Cardiac septum (tissue), 1 donor: ENCODE measurements at regions of chr6 and their contacts with region 1.

Region 1: GRCh38 chr6:56757588-56757984 is 114.9 kb upstream of the DST start:
- DNase-seq: no peak

Region 2: DNA sequence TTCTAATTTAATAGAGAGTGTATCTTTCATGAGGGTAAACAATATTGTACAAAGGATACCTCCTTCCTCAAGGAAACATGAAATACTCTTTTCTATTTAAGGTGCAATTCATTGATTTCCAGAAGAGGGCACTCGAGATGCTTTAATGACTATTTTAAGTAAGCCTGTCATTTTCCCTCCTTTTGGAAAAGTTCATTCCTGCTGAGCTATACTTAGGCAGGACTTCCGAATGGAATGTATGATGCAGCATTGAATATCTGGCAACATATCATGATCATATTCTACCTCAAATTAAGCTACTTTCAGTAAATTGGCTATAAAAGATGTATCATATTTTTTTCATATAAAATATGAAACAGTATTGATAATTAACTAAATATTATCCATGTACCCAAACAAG is 119.9 kb before region 1 on chr6:
- intact Hi-C with region 1: loop called (anchors 5 kb)
- DNase-seq: no peak

Region 3: GRCh38 chr6:56708810-56709597 is 48.6 kb before region 1 on chr6:
- intact Hi-C with region 1: loop called (anchors 5 kb)
- DNase-seq: no peak

Region 4: GRCh38 chr6:56802584-56802983 is 45.0 kb after region 1 on chr6:
- intact Hi-C with region 1: no loop called
- DNase-seq: no peak